ENCODE measurements at regions of chr13 and their contacts with region 1.

Region 1: DNA sequence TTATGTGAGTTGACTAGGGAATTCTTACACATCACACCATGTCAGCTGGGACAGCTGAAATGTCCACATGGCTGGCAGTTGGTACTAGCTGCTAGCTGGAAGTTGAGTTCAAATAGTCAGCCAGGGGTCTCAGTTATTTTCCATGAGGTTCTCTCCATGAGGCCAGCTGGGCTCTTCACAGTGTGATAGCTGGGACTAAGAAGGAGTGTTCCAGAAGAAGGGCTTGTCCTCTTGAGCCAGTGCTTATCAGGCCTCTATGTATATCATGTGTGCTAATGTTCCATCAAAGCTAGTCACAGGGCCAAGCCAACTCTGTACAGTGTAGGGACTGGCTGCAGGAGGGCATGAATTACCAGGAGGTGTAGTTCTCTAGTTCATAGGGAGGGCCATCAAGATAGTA is 11.8 kb downstream of the USPL1 start:
- DNase-seq: no peak
- ATAC-seq: no peak
- H3K4me3 Mint-ChIP-seq: no peak overlapping the region
- H3K27ac Mint-ChIP-seq: peak overlapping the region; percentile 18
- H3K4me1 Mint-ChIP-seq: peaks cover 45% of the 10 kb centered on the region
- H3K27me3 Mint-ChIP-seq: no peaks in the 10 kb centered on the region
- CTCF ChIP-seq: no peak

Region 2: DNA sequence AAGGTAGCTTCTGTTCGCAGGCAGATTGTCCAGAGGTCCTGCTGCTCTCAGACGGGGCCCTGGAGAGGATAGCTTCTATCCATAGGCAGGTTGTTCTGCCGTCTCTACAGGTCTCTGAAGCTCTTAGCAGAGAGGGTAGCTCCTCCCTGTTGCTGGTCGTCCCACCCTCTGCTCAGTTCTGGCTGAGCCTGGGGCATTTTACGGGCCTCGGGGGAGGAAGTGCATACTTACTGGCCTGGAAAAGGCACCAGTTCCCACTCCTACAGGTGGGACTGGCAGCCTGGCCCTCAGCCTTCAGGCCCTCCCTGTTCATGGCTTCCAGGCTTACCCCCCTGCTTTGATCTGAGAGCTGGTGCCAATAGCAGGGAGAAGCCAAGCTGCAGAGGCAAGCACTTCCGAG is 30.5 kb after region 1 on chr13:
- CTCF ChIA-PET with region 1: no interaction called
- POLR2A ChIA-PET with region 1: interaction called, 9 read pairs
- intact Hi-C with region 1: loop called (anchors 2 kb)
- DNase-seq: no peak
- ATAC-seq: no peak
- H3K4me3 Mint-ChIP-seq: peak overlapping the region; percentile 53
- H3K27ac Mint-ChIP-seq: peak overlapping the region; percentile 84
- H3K4me1 Mint-ChIP-seq: peaks cover 5% of the 10 kb centered on the region
- H3K27me3 Mint-ChIP-seq: no peaks in the 10 kb centered on the region
- CTCF ChIP-seq: no peak